Esophagus muscularis mucosa (tissue), 4 donors: ENCODE measurements at regions of chr2 and their contacts with region 1.

Region 1: GRCh38 chr2:215664847-215665525 is 229.1 kb upstream of the FN1 start:
- DNase-seq: no peak
- H3K4me3 ChIP-seq: no peak overlapping the region
- H3K27ac ChIP-seq: peak overlapping the region; percentile 49 to 79 (median 62)
- H3K4me1 ChIP-seq: peaks cover 7 to 71% (median 57%) of the 10 kb centered on the region in 4 donors
- H3K27me3 ChIP-seq: no peaks in the 10 kb centered on the region
- CTCF ChIP-seq: no peak
- EP300 ChIP-seq: no peak
- POLR2A ChIP-seq: no peak

Region 2: GRCh38 chr2:215435809-215436704 is 228.9 kb before region 1 on chr2 and contains the start of gene FN1:
- intact Hi-C with region 1: loop called (anchors 10 kb)
- DNase-seq: peak; percentile 98
- H3K4me3 ChIP-seq: peak within 1 kb of the TSS; percentile 74 to 95 (median 88)
- H3K27ac ChIP-seq: peak within 1 kb of the TSS; percentile 87 to 97 (median 96)
- H3K4me1 ChIP-seq: peaks cover 9 to 48% (median 39%) of the 10 kb centered on the region in 4 donors
- H3K27me3 ChIP-seq: no peaks in the 10 kb centered on the region
- CTCF ChIP-seq: no peak
- EP300 ChIP-seq: no peak
- POLR2A ChIP-seq: peak; percentile 71
- total RNA-seq, gene FN1: 2,256 to 4,873 (median 2,950) TPM

Region 3: GRCh38 chr2:215624423-215624829 is 40.6 kb before region 1 on chr2:
- intact Hi-C with region 1: loop called (anchors 5 kb)
- DNase-seq: no peak
- H3K4me3 ChIP-seq: no peak overlapping the region
- H3K27ac ChIP-seq: peak overlapping the region; percentile 78 to 86 (median 86)
- H3K4me1 ChIP-seq: peaks cover 0 to 65% (median 50%) of the 10 kb centered on the region in 4 donors
- H3K27me3 ChIP-seq: no peaks in the 10 kb centered on the region
- CTCF ChIP-seq: peak in 1 of 3 experiments; percentile 3
- EP300 ChIP-seq: peak; percentile 95
- POLR2A ChIP-seq: no peak

Region 4: GRCh38 chr2:215705771-215706361 is 40.9 kb after region 1 on chr2:
- intact Hi-C with region 1: loop called (anchors 5 kb)
- DNase-seq: no peak
- H3K4me3 ChIP-seq: no peak overlapping the region
- H3K27ac ChIP-seq: peak overlapping the region; percentile 69 to 75 (median 72)
- H3K4me1 ChIP-seq: peaks cover 12 to 57% (median 51%) of the 10 kb centered on the region in 4 donors
- H3K27me3 ChIP-seq: no peaks in the 10 kb centered on the region
- CTCF ChIP-seq: no peak
- EP300 ChIP-seq: no peak
- POLR2A ChIP-seq: no peak

Region 5: DNA sequence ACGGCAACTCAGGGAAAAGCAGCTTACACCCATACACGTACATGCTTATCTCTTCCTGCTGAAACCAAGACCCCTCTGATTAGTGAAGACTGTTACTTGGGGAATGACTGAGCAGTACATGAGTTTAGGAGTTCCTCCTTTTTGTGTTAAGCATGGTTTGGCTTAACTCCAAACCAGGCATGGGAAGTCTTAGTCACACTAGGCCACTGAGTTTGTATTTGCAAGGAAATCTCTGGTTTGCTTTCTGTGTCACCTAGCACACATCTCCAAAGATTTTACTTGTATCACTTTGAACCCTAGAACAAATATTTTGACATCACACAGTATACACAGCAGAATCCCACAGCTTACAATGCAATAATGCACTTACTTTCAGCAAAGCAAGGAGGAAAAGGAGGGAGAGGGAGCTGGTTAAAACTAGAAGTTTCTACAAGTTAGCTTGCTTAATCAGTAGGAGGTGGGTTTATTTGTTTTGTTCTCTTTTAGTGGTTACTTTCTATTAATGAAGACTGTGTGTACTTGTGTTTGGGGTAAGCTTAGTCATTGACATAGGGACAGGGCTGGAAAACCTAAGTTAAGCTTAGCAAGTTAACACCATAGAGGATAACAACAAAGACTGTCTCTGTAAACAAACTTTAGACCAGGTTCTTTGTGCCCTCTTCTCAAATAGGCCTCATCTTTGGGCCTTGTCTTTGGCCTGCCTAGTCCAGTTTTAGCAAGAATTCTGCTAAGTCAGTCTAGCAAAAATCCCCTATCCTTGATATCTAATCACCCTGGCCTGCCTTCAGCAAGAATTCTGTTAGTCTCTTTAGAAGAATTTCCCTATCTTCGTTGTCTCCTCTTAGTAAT is 129.0 kb after region 1 on chr2:
- intact Hi-C with region 1: loop called (anchors 10 kb)
- DNase-seq: no peak
- H3K4me3 ChIP-seq: no peak overlapping the region
- H3K27ac ChIP-seq: peak overlapping the region; percentile 48 to 61 (median 52)
- H3K4me1 ChIP-seq: peaks cover 0 to 77% (median 55%) of the 10 kb centered on the region in 4 donors
- H3K27me3 ChIP-seq: no peaks in the 10 kb centered on the region
- CTCF ChIP-seq: no peak
- EP300 ChIP-seq: no peak
- POLR2A ChIP-seq: no peak